Activated T-helper 1 cell treated with anti-CD3 and anti-CD28 coated beads, Interleukin-12 subunit alpha, Interleukin-12 subunit beta, Interleukin-2, Interleukin-4 antibody, amounts not matched to agents 30 ng/mL and 10 ng/mL and 1 ng/mL, durations not matched to agents 14 hours and 24 hours and 36 hours (primary cell): ENCODE measurements at regions of chr6 and their contacts with region 1.

Region 1: DNA sequence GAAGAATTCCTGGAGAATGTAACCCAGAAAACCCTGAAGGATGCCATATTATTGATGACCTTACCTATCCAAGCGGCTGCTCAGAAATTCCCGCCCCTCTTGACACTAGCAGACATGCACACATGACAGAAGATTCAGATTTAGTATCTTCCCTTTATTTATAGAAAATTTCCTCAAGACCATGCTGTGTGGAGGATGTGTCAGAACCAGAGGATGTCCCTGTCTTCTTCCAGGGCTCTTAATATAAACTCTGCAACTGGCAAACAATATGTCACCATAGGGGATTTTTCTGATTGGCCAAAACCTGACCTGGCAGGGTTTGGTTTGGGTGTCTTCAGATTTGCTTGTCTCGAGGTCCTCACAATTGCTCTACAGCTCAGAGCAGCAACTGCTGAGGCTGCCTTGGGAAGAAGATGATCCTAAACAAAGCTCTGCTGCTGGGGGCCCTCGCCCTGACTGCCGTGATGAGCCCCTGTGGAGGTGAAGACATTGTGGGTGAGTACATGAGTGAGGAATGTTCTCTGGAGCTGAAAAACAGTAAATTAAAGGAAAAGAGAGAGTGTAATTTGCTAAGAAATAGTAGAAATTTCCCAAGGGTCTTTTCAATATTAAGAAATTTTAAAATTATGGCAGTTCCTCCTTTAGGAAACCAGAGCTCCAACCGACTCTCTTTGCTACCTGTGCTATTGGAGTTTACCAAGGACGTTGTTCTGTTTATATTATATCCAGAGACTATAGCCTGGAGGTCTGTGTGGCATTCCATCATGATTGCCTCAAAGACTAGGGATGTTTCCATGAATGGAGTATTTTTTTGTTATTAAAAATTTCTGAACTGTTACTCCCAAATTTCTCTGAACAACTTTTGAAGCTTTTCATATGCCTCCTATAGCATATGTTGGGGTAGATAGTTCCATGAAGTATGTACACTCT is at the start of gene HLA-DQA2:
- DNase-seq: no peak
- H3K4me3 Mint-ChIP-seq: no peak within 1 kb of the TSS
- H3K27ac Mint-ChIP-seq: no peak within 1 kb of the TSS
- H3K4me1 Mint-ChIP-seq: peaks cover 5% of the 10 kb centered on the region
- H3K27me3 Mint-ChIP-seq: peaks cover 32% of the 10 kb centered on the region
- total RNA-seq, gene HLA-DQA2: 1.8 and 2.7 TPM in 2 replicates

Region 2: GRCh38 chr6:32637219-32637880 is 103.9 kb before region 1 on chr6 and contains the start of gene HLA-DQA1:
- intact Hi-C with region 1: loop called (anchors 5 kb)
- DNase-seq: no peak
- H3K4me3 Mint-ChIP-seq: peak within 1 kb of the TSS; percentile 83
- H3K27ac Mint-ChIP-seq: peak within 1 kb of the TSS; percentile 73
- H3K4me1 Mint-ChIP-seq: peaks cover 46% of the 10 kb centered on the region
- H3K27me3 Mint-ChIP-seq: peaks cover 16% of the 10 kb centered on the region
- total RNA-seq, gene HLA-DQA1: 12.5 and 13.3 TPM in 2 replicates

Region 3: GRCh38 chr6:32763427-32763826 is 22.1 kb after region 1 on chr6 and contains the start of gene HLA-DQB2:
- intact Hi-C with region 1: no loop called
- DNase-seq: no peak
- H3K4me3 Mint-ChIP-seq: no peak within 1 kb of the TSS
- H3K27ac Mint-ChIP-seq: no peak within 1 kb of the TSS
- H3K4me1 Mint-ChIP-seq: no peaks in the 10 kb centered on the region
- H3K27me3 Mint-ChIP-seq: peaks cover 16% of the 10 kb centered on the region
- total RNA-seq, gene HLA-DQB2: 0.51 and 0.67 TPM in 2 replicates